ENCODE measurements at regions of chr4 and their contacts with region 1.

Region 1: GRCh38 chr4:38132107-38132673 is 172.0 kb downstream of the PTTG2 start:
- DNase-seq: no peak
- ATAC-seq: peak; percentile 74
- H3K4me3 Mint-ChIP-seq: peak overlapping the region; percentile 8
- H3K27ac Mint-ChIP-seq: peak overlapping the region; percentile 78
- H3K4me1 Mint-ChIP-seq: peaks cover 44% of the 10 kb centered on the region
- H3K27me3 Mint-ChIP-seq: no peaks in the 10 kb centered on the region
- CTCF ChIP-seq: no peak

Region 2: GRCh38 chr4:38153387-38153760 is 21.2 kb after region 1 on chr4:
- CTCF ChIA-PET with region 1: no interaction called
- POLR2A ChIA-PET with region 1: no interaction called
- intact Hi-C with region 1: loop called (anchors 2 kb)
- DNase-seq: no peak
- ATAC-seq: no peak
- H3K4me3 Mint-ChIP-seq: no peak overlapping the region
- H3K27ac Mint-ChIP-seq: no peak overlapping the region
- H3K4me1 Mint-ChIP-seq: peaks cover 25% of the 10 kb centered on the region
- H3K27me3 Mint-ChIP-seq: no peaks in the 10 kb centered on the region
- CTCF ChIP-seq: no peak

Measured in activated B cell treated with CpG ODN at 0.5 μM for 24 hours (primary cell).